Transverse colon (tissue), 4 donors: ENCODE measurements at regions of chr16 and their contacts with region 1.

Region 1: DNA sequence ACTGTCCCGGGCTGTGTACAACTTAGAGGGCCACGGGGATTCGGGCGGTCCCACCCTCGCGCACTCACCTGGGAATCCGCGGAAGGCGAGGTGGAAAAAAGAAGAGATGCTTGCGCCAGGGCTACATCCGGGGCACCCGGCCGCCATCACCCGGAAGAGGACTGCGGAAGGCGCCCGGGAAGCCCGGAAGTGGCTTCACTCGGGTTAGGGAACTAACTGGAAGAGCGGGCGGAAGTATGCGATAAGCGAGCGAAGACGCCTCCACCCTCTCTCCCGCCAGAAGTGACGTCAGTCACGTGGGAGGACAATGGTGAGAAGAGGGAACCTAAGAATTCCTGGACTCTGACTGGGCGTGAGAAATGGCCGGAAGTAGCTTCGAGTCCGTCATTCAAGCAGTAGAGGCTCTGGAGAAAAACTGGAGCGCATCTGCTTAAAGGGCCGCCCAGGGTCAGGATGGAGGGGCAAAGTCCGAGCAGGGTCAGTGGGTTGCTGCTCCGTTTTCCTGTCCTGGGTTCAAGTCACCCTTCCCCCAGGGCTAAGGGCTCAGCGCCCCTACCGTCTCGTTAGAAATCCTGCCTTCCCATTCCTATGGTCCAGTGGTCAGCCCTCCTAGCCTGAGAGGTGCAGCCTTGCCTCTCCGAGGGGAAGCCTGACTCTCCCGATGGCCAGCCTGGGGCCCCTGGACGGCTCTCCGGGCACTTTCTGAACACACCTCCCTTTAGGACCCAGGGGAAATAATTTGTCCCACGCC is at the start of gene CD2BP2:
- DNase-seq: peak; percentile 98
- H3K4me3 ChIP-seq: peak within 1 kb of the TSS; percentile 65 to 94 (median 86)
- H3K27ac ChIP-seq: peak within 1 kb of the TSS; percentile 88 to 99 (median 96)
- H3K4me1 ChIP-seq: peaks cover 28 to 49% (median 32%) of the 10 kb centered on the region in 4 donors
- H3K27me3 ChIP-seq: no peaks in the 10 kb centered on the region
- CTCF ChIP-seq: peak in 1 of 5 experiments; percentile 26
- EP300 ChIP-seq: peak; percentile 37
- POLR2A ChIP-seq: peak; percentile 11
- total RNA-seq, gene CD2BP2: 25.8 to 41.1 (median 33.0) TPM

Region 2: DNA sequence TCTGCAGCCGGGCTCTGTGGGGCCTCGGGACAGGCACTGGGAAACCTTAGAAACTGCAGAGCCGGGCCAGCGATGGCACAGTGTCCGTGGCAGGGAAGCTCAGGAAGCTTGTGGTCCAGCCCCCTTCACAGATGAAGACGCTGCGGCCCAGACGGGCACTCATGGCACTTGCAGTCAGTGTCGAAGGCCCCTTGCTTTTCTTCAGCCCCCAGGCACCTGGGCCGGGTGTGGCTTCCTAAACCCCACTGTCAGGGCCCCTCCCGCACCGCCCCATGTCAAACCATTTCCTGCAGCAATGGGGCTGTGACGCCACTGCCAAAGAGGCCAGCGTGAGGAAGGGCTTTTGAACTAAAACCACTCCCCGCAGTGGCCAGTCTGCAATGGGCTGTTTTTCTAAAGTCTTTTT is 1206.4 kb before region 1 on chr16:
- in situ Hi-C with region 1: no loop called
- intact Hi-C with region 1: loop called (anchors 5 kb)
- DNase-seq: peak; percentile 60
- H3K4me3 ChIP-seq: no peak overlapping the region
- H3K27ac ChIP-seq: peak overlapping the region in 1 of 4 donors; percentile 40
- H3K4me1 ChIP-seq: peaks cover 0 to 2% (median 0%) of the 10 kb centered on the region in 4 donors
- H3K27me3 ChIP-seq: no peaks in the 10 kb centered on the region
- CTCF ChIP-seq: no peak
- EP300 ChIP-seq: no peak
- POLR2A ChIP-seq: no peak

Region 3: GRCh38 chr16:30399435-30400186 is 44.3 kb after region 1 on chr16:
- in situ Hi-C with region 1: no loop called
- intact Hi-C with region 1: loop called (anchors 2 kb)
- DNase-seq: no peak
- H3K4me3 ChIP-seq: peak overlapping the region; percentile 39 to 92 (median 54)
- H3K27ac ChIP-seq: peak overlapping the region; percentile 80 to 91 (median 86)
- H3K4me1 ChIP-seq: peaks cover 22 to 43% (median 24%) of the 10 kb centered on the region in 4 donors
- H3K27me3 ChIP-seq: no peaks in the 10 kb centered on the region
- CTCF ChIP-seq: no peak
- EP300 ChIP-seq: no peak
- POLR2A ChIP-seq: no peak

Region 4: DNA sequence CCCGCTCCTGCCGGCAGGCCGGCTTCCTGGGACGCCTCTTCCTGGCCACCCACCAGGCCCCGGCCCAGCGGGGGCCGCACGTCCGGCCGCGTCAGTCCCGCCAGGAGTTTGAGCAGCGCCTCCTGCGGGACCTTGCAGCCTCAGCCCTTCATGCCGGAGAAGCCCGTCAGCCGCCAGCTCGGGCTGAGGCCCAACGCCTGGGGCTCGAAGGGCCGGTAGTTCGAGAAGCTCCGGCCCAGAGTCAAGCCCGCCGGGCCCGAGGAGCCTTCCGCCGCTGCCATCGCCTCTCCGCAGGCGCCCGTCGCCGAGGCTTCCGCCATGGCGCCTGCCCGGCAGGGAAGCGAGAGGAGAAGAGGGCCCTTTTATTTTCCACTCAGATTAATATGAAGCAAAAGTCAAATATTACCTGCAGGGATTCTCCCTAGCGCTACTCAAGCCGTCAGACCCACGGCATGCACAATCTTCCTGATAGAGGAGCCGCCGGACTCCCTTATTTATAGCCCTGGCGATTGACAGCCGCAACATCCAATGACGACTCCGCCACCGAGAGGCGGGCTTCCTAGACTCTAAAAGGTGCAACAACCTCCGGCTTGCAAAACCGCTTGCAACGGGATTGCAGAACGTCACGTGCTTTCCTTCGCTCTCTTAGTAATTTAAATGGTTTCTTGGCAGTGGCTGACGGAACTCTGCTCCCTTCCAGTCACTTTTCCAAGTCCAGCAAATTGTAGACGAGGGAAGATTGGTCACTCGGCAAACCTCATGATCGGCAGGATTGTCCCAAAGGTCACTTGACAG is 90.3 kb after region 1 on chr16 and contains the start of gene SEPHS2:
- in situ Hi-C with region 1: no loop called
- intact Hi-C with region 1: no loop called
- DNase-seq: peak; percentile 99
- H3K4me3 ChIP-seq: peak within 1 kb of the TSS; percentile 70 to 99 (median 76)
- H3K27ac ChIP-seq: peak within 1 kb of the TSS; percentile 93 to 99 (median 96)
- H3K4me1 ChIP-seq: peaks cover 11 to 49% (median 32%) of the 10 kb centered on the region in 4 donors
- H3K27me3 ChIP-seq: no peaks in the 10 kb centered on the region
- CTCF ChIP-seq: peak; percentile 21 to 53 (median 42)
- EP300 ChIP-seq: no peak
- POLR2A ChIP-seq: peak; percentile 94
- total RNA-seq, gene SEPHS2: 86.7 to 218 (median 151) TPM